ENCODE measurements at regions of chr15 and their contacts with region 1.

Region 1: DNA sequence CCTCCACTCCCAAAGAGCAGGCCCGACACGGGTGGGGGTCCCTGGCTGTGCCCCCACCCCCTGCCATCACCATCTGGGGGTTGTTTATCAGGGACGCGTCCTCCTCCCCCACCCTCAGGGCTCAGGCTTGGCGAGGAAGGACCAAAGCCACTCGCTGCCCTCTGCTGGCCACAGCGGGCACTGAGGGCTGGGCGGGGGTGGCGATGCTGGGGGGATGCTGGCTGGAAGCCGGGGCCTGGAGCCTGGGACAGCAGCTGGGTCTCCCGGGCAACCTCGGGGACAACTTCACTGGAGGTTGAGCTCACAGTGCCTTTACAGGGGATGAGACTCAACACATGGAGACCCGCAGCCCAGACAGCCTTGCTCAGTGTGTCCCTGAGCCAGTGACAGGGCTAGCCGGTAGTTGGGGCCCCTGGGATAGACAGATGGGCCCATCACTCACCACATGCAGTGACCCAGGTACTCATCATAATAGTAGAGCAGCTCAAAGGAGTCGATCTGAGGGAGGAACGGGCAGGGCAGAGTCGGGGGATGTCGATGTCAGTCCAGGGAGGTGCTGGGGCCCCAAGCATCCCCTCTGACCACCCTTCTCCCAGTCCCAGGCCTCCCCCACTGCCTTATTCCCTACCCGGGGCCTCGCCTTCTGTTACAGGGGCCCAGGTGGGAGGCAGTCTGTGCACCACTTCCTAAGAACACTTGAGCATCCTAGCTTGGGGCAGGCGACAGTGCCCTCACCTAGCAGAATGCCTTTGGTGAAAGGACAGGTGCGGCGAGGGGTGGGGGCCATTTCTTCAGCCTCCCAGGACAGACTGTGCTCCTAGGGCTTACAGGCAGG is 5.9 kb upstream of the CALML4 start:
- DNase-seq: no peak
- H3K4me3 ChIP-seq: no peak overlapping the region
- CTCF ChIP-seq: peak; percentile 96

Region 2: DNA sequence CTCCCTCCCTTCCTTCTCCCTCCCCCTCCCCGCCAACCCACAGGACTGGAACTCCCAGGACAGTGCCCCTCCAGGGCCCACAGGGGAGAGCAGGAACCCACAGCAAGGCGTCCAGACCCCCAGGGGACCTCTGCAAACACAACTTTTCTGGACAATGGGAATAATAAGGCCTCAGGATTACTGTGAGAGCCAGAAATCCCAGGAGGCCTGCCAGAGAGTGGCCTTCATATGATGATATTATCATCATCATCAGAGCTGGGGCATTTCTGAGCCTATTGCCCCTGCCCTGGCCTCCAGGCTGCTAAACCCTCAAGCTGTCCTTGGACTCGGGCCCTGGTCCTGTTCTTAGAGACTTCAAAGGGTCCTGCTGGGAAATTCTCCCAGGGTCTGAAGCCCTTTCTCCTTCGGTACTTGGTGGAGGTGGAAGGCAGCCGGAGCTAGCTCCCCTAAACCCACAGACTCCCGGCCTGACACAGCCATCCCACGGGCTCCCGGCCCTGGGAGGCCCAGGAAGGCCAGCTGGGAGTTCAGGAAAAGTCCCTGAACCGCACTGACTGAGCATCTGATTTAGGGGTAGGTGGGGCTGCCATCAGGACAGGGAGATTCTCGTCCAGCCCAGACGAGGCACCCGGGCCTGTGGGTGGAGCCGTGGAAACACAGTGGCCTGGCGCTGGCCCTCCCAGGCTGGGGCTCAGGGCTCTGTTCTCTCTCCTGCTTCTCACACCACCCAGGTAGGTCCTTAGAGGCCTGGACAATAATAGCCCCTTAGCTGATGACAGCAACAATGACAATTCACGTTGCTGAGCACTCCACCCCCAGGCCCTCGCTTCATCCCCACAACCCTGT is 10.8 kb before region 1 on chr15:
- CTCF ChIA-PET with region 1: interaction called, 19 read pairs
- POLR2A ChIA-PET with region 1: no interaction called
- DNase-seq: no peak
- H3K4me3 ChIP-seq: no peak overlapping the region
- CTCF ChIP-seq: no peak

Region 3: GRCh38 chr15:68229386-68230156 is 18.5 kb after region 1 on chr15 and contains the start of gene CLN6:
- CTCF ChIA-PET with region 1: interaction called, 40 read pairs
- POLR2A ChIA-PET with region 1: no interaction called
- DNase-seq: peak; percentile 28
- H3K4me3 ChIP-seq: peak within 1 kb of the TSS; percentile 77
- CTCF ChIP-seq: no peak

Region 4: DNA sequence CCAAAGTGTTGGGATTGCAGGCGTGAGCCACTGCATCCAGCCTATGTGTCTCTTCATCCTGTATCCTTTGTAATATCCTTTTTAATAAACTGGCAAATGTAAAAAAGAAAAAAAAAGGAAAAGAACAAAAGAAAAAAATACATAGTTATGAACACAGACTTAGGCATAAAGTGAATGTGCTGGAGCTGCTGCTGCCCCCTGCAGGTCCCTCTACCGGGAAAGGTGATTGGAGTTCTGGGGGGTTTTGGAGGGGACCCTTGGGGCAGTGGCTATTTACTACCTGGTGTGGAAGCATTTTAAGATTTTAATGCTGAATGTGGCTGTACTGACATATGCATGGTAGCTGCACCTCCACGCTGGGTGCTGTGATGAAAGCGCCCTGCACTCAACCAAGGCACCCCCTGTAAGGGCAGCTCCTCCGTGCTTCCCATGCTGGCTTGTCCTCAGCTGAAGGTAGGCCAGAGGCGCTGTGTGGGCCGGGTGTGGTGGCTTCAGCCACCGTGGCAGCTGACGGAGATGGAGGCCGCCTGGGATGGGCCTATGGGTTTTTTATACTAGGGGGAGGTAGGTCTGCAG is 1291.5 kb after region 1 on chr15:
- CTCF ChIA-PET with region 1: no interaction called
- POLR2A ChIA-PET with region 1: no interaction called
- DNase-seq: no peak
- H3K4me3 ChIP-seq: no peak overlapping the region
- CTCF ChIP-seq: no peak

Measured in AG04449 (cell line).